Heart right ventricle (tissue), 16 donors: ENCODE measurements at regions of chr4 and their contacts with region 1.

Region 1: DNA sequence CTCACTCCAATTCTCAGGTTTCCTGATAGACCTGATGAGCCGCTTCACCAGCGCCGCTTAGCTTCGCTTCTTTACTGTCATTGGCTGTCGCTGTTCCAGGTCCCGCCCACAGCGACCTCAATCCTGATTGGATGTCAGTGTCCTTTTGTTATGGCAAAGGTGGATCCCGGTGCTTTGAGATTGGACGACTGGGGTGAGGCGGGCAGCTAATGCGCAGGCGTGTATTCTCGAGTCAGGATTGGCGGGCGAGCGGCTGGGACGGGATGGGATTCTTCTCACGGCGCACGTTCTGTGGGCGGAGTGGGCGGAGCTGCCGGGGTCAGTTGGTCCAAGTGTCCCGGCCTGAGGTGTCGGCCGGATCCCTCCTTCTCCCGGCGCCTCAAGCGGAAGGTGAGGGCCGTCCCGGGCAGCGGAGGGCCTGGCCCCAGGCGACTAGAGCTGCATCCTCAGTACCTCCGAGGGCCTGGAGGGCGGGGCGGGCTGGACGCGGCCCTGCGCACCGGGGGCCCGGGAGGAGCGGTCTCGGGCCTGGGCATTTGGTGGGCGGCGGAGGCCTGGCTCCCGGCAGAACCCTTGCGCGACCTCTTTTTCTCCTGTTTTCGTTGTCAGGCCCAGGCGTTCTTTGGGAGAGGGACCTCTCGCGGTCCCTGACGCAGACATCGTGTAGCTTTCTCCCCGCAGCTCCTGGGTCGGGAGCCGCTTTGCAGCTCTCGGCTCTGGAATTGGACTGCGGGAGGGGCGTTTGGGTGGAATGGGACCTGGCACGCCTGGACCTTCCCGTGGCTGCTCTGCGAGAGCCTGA is at the start of gene SCOC:
- DNase-seq: peak; percentile 98 to 99
- ATAC-seq: peak; percentile 98 to 100 (median 99)
- H3K4me3 ChIP-seq: peak within 1 kb of the TSS; percentile 72 to 96 (median 85)
- H3K27ac ChIP-seq: peak within 1 kb of the TSS; percentile 84 to 97 (median 94)
- H3K4me1 ChIP-seq: peaks cover 0 to 53% (median 42%) of the 10 kb centered on the region in 9 donors
- H3K27me3 ChIP-seq: no peaks in the 10 kb centered on the region
- CTCF ChIP-seq: no peak
- total RNA-seq, gene SCOC: 61.8 to 76.8 (median 67.0) TPM

Region 2: DNA sequence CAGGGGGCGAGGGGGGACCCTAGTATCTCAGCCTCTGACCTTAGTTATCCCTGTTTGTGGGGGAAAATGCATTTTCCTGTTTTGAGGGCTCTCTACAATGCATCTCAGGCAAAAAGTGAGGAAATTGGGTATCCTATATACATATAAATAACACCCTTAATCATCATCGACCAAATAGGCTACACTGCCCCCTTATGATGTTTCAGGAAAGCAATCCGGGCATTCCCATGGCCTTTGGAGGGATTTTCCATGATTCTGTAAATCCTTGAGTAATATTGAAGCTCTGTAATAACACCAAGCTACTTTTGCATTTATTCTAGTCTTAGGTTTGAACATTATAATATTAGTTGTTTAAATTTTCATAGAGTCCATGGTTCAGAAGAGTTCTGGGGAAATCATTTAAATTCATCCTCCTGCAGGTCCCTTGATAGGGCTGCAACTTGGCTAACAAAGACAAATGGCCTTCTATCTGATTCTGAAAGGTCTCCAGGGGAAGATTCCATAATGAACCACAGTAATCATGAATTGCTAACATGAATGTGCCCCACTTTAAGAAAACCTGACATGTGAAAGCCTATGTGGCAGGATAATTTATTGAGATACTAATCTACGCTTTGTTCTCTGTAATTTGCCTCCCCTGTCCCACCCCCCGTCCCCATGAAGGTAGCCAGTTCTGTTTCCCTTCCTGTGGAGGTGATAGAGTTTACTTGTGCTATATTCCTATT is 91.5 kb before region 1 on chr4:
- intact Hi-C with region 1: no loop called
- DNase-seq: no peak
- ATAC-seq: no peak
- H3K4me3 ChIP-seq: no peak overlapping the region
- H3K27ac ChIP-seq: no peak overlapping the region
- H3K4me1 ChIP-seq: no peaks in the 10 kb centered on the region
- H3K27me3 ChIP-seq: peaks cover 0 to 17% (median 0%) of the 10 kb centered on the region in 7 donors
- CTCF ChIP-seq: no peak

Region 3: DNA sequence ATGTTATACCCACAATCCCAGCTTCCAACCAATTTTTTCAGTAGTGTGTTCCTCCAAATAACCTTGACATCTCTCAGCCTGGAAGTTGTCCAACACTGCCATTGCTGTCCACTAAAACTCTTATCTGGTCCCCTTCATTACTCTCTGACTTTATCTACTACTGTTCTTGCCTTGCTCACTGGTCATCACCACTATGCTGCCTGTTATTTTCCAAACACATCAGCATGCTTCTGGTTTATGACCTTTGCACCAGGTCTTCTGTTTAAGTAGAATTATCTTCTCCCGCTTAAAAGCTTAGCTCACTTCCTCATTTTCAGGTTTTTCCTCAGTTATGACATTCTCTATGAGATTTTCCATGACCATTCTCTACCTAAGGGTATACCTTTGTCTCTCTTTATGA is 155.9 kb after region 1 on chr4:
- intact Hi-C with region 1: loop called in 6 of 10 experiments (anchors 5 to 10 kb)
- DNase-seq: peak in 1 of 2 donors; percentile 44
- ATAC-seq: peak in 7 of 8 donors; percentile 53 to 92 (median 84)
- H3K4me3 ChIP-seq: no peak overlapping the region
- H3K27ac ChIP-seq: peak overlapping the region in 9 of 10 donors; percentile 13 to 77 (median 62)
- H3K4me1 ChIP-seq: peaks cover 0 to 39% (median 13%) of the 10 kb centered on the region in 9 donors
- H3K27me3 ChIP-seq: no peaks in the 10 kb centered on the region
- CTCF ChIP-seq: no peak

Region 4: DNA sequence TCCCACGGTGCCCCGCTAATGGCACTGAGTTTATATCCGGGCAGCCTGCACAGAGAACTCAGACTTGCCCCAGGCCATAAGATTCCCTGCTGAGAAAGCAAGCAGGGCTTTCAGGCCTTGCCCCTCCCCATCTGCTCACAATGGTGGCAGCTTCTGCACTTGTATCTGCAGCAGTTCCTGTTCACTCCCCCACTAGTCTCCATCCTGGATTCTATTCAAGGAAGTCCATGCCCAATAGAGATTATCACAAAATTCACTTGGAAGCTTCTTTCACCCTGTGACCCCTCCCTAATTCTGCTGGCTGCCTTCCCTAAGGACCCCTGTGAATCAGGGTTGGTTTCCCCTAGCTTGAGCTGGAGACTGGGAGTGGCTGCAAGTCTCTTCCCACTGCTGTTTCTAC is 229.7 kb after region 1 on chr4:
- intact Hi-C with region 1: loop called in 2 of 10 experiments (anchors 5 to 10 kb)
- DNase-seq: peak in 1 of 2 donors; percentile 64
- ATAC-seq: peak; percentile 67 to 91 (median 80)
- H3K4me3 ChIP-seq: no peak overlapping the region
- H3K27ac ChIP-seq: peak overlapping the region in 9 of 10 donors; percentile 18 to 80 (median 63)
- H3K4me1 ChIP-seq: peaks cover 4 to 29% (median 13%) of the 10 kb centered on the region in 9 donors
- H3K27me3 ChIP-seq: no peaks in the 10 kb centered on the region
- CTCF ChIP-seq: no peak